Left lung (tissue), 14 donors: ENCODE measurements at regions of chr12 and their contacts with region 1.

Region 1: DNA sequence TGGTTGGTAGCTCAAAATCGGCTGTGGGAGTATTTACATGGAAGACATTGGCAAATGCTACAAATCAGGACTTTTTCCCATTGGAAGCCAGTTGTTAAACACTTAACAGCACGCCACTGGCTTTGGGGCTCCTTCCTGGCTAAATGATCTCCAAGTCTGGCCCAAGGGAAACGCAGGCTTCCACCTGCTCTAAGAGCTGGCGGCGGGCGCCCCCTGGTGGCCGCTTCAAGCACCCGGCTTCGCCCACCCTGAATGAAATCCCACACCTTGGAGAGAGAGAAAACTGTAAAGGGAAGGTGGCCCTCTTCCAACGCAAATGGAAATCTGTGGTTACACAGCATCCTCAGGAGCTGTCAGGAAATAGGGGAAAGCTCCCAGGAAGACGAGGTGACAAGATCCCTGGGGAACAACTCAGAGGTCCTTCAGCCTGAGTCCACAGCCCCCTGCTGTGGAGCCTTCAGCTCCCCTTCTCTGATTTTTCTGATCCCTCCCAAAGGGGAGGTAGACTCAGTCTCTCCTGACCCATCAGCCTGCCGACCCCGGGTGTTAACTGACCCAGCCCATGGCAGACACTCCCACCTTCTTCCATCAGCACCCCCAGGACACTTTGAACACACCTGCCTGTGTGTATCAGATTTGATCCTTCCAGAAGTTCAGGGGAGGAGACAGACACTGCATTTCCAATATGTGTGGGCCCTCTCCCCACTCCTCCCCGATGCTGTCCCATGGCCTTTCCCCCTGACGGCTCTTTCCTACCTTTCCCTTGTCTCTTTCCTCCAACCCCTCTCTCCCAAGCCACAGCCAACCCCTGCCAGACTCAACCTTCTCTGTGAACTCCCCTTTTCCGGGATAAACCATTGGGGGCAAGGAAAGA is 15.4 kb downstream of the SELPLG start:
- DNase-seq: peak; percentile 72 to 96 (median 84)
- ATAC-seq: peak; percentile 92
- H3K4me3 ChIP-seq: no peak overlapping the region
- H3K27ac ChIP-seq: peak overlapping the region in 1 of 2 donors; percentile 81
- H3K4me1 ChIP-seq: peaks cover 19 to 79% of the 10 kb centered on the region in 2 donors
- H3K27me3 ChIP-seq: no peaks in the 10 kb centered on the region
- CTCF ChIP-seq: peak; percentile 97 to 99

Region 2: GRCh38 chr12:108514973-108515814 is 103.1 kb before region 1 on chr12 and contains the start of gene FICD:
- intact Hi-C with region 1: no loop called
- DNase-seq: peak; percentile 96 to 100 (median 100)
- ATAC-seq: peak; percentile 97
- H3K4me3 ChIP-seq: peak within 1 kb of the TSS; percentile 84 to 87
- H3K27ac ChIP-seq: peak within 1 kb of the TSS in 1 of 2 donors; percentile 67
- H3K4me1 ChIP-seq: peaks cover 4 to 15% of the 10 kb centered on the region in 2 donors
- H3K27me3 ChIP-seq: no peaks in the 10 kb centered on the region
- CTCF ChIP-seq: no peak
- polyA plus RNA-seq, gene FICD: 2.6 to 4.0 (median 2.8) TPM

Region 3: DNA sequence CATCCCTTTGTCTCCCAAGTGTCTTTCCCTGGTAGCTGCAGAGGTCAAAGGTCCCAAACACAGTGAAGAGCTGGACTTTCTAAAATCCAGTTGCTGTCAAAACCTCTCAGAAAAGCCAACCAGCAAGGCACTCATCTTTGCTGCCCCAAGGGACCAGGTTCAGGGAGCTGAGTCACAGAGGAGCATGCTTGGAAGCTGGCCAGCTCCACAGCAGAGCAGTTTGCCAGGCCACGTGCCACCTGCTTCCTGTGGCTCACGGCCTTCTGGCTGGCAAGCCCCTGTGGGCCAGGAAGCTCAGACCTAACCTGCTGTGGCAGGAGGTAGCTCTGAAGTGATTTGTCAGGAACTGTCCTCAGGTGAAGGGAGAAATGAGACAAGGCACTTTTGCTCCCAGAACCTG is 52.3 kb before region 1 on chr12:
- intact Hi-C with region 1: loop called in 1 of 2 experiments (anchors 5 kb)
- DNase-seq: peak in 2 of 4 donors; percentile 87 to 89
- ATAC-seq: peak; percentile 5
- H3K4me3 ChIP-seq: no peak overlapping the region
- H3K27ac ChIP-seq: peak overlapping the region; percentile 45 to 77
- H3K4me1 ChIP-seq: peaks cover 19 to 56% of the 10 kb centered on the region in 2 donors
- H3K27me3 ChIP-seq: no peaks in the 10 kb centered on the region
- CTCF ChIP-seq: no peak

Region 4: GRCh38 chr12:108576660-108577234 is 41.6 kb before region 1 on chr12:
- intact Hi-C with region 1: no loop called
- DNase-seq: no peak
- ATAC-seq: no peak
- H3K4me3 ChIP-seq: no peak overlapping the region
- H3K27ac ChIP-seq: no peak overlapping the region
- H3K4me1 ChIP-seq: no peaks in the 10 kb centered on the region
- H3K27me3 ChIP-seq: no peaks in the 10 kb centered on the region
- CTCF ChIP-seq: no peak